PC-9 (cell line): ENCODE measurements at regions of chr3 and their contacts with region 1.

Region 1: GRCh38 chr3:66073464-66074141 is 34.9 kb upstream of the MAGI1 start:
- DNase-seq: no peak
- H3K4me3 ChIP-seq: no peak overlapping the region
- H3K27ac ChIP-seq: no peak overlapping the region
- H3K4me1 ChIP-seq: no peaks in the 10 kb centered on the region
- H3K27me3 ChIP-seq: no peaks in the 10 kb centered on the region
- CTCF ChIP-seq: no peak

Region 2: DNA sequence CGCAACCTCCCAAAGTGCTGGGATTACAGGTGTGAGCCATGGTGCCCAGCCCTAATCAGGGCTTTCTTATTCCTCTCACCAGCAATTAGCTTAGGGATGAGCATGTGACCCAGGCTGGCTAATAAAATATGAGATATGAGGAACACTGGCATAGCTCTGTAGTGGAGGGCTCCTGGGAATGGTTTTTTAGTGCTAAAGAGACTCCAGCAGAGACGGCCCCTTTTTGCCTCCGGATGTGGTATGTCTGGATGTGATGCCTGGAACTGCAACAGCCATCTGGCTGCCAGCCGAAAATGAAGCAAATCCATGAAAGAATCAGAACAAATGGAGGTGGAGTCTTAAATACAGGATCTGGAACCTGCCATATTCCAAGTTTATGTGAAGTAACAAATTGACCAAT is 34.3 kb after region 1 on chr3:
- CTCF ChIA-PET with region 1: no interaction called
- POLR2A ChIA-PET with region 1: interaction called, 11 read pairs
- intact Hi-C with region 1: no loop called
- DNase-seq: no peak
- H3K4me3 ChIP-seq: no peak overlapping the region
- H3K27ac ChIP-seq: no peak overlapping the region
- H3K4me1 ChIP-seq: no peaks in the 10 kb centered on the region
- H3K27me3 ChIP-seq: no peaks in the 10 kb centered on the region
- CTCF ChIP-seq: no peak